ENCODE measurements at regions of chr7 and their contacts with region 1.

Region 1: GRCh38 chr7:149838224-149838947 is at the start of gene ZNF862:
- DNase-seq: peak; percentile 89 to 99 (median 96)
- ATAC-seq: peak; percentile 97
- H3K4me3 ChIP-seq: peak within 1 kb of the TSS; percentile 65 to 76
- H3K4me3 Mint-ChIP-seq: peak within 1 kb of the TSS; percentile 94
- H3K27ac ChIP-seq: peak within 1 kb of the TSS; percentile 43 to 46
- H3K27ac Mint-ChIP-seq: peak within 1 kb of the TSS; percentile 93
- H3K4me1 ChIP-seq: peaks cover 17% of the 10 kb centered on the region
- H3K4me1 Mint-ChIP-seq: peaks cover 48% of the 10 kb centered on the region
- H3K27me3 ChIP-seq: no peaks in the 10 kb centered on the region
- H3K27me3 Mint-ChIP-seq: no peaks in the 10 kb centered on the region
- CTCF ChIP-seq: no peak
- total RNA-seq, gene ZNF862: 18.8 TPM

Region 2: DNA sequence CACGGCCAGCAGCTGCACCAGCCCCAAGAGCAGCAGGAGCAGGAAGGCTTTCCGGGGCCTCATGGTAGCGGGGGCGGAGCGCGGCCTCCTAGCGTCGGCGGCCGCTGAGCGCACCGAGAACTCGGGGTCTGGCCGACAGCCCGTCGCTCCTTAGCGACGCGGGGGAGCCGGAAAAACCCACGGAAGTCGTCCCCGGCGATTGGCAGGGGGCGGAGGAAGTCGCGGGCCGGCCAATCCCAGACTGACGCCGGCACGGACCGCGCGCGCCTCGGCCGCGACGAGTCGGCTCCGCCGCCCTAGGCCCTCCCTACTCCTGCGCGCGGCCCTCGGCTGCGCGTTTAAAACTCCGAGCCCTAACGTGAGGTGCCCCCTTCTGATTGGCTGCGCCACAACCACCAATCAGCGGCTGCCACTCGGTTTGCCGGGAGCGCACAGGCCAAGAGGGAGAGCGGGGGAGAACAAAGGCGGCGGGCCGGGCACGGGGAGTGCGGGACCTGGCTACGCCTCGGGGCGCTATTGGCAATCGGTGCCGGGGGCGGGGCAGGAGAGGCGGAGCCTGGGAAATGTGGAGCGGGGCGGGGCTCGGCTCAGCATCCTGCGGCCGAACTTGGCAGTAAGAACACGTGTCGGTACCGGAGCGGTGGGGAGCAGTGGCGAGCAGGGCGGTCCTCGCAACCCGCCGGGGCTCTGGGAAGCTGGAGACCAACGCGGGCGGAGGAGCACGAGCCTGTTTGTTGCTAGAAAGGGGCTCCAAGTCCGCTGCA is 809.9 kb before region 1 on chr7 and contains the start of gene PDIA4:
- CTCF ChIA-PET with region 1: no interaction called
- POLR2A ChIA-PET with region 1: no interaction called
- intact Hi-C with region 1: loop called in 1 of 2 experiments (anchors 5 kb)
- DNase-seq: peak; percentile 98 to 100 (median 99)
- ATAC-seq: peak; percentile 88
- H3K4me3 ChIP-seq: peak within 1 kb of the TSS; percentile 58 to 78
- H3K4me3 Mint-ChIP-seq: peak within 1 kb of the TSS; percentile 87
- H3K27ac ChIP-seq: peak within 1 kb of the TSS; percentile 62 to 78
- H3K27ac Mint-ChIP-seq: peak within 1 kb of the TSS; percentile 94
- H3K4me1 ChIP-seq: peaks cover 27% of the 10 kb centered on the region
- H3K4me1 Mint-ChIP-seq: peaks cover 49% of the 10 kb centered on the region
- H3K27me3 ChIP-seq: no peaks in the 10 kb centered on the region
- H3K27me3 Mint-ChIP-seq: no peaks in the 10 kb centered on the region
- CTCF ChIP-seq: no peak
- total RNA-seq, gene PDIA4: 12.0 to 14.5 TPM

Region 3: DNA sequence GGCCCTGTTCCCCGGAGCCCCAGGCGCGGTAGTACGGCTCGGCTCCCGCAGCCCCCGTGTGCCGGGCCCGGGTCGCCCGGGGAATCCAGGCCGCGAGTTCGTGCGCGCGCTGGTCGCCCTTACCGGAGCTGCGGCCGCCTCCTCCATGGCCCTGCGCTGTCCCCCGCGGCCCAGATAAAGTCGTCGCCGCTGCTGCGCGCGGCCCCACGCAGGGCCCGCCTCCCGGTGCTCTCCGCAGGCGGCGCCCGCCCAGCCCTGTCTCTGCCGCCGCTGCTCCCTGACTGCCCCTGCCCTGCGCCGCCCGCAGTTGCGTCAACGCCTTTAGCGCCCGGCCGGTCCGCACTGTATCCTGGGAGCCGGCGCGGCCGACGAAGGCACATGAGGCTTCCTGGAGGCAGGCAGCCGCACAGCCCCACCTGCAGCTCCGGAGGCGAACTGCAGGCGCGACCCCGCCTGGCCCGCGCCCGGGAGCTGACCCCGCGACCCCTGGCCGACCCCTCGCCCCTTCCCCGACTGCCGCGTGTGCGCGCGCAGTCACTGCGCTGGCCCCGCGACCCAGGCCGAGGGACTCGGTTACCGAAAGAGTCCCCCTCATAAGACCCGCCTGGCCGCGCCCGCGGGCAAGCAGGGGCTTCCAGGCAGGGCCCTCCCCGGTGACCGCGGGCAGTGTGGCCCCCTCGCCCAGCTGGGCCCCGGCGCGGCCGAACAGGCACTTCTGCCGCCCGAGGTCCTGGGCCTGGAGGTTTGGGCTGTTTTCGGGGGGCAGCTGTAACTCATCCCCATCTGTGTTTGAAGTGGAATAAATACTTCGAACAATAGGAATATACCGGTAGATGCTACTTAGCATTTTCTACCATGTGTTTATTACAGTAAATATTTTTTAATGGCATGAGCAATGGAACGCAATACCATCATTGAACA is 213.7 kb before region 1 on chr7:
- CTCF ChIA-PET with region 1: interaction called, 3 read pairs
- POLR2A ChIA-PET with region 1: no interaction called
- intact Hi-C with region 1: loop called in 1 of 2 experiments (anchors 1 kb)
- DNase-seq: peak; percentile 84 to 96 (median 90)
- ATAC-seq: peak; percentile 84
- H3K4me3 ChIP-seq: peak overlapping the region; percentile 68 to 86
- H3K4me3 Mint-ChIP-seq: peak overlapping the region; percentile 93
- H3K27ac ChIP-seq: peak overlapping the region; percentile 46 to 68
- H3K27ac Mint-ChIP-seq: peak overlapping the region; percentile 93
- H3K4me1 ChIP-seq: peaks cover 27% of the 10 kb centered on the region
- H3K4me1 Mint-ChIP-seq: peaks cover 41% of the 10 kb centered on the region
- H3K27me3 ChIP-seq: no peaks in the 10 kb centered on the region
- H3K27me3 Mint-ChIP-seq: peaks cover 3% of the 10 kb centered on the region
- CTCF ChIP-seq: peak; percentile 99

Region 4: GRCh38 chr7:149771721-149772240 is 66.6 kb before region 1 on chr7:
- CTCF ChIA-PET with region 1: no interaction called
- POLR2A ChIA-PET with region 1: no interaction called
- intact Hi-C with region 1: loop called (anchors 1 to 2 kb)
- DNase-seq: peak; percentile 70 to 91 (median 84)
- ATAC-seq: peak; percentile 88
- H3K4me3 ChIP-seq: peak overlapping the region; percentile 63 to 66
- H3K4me3 Mint-ChIP-seq: peak overlapping the region; percentile 71
- H3K27ac ChIP-seq: no peak overlapping the region
- H3K27ac Mint-ChIP-seq: no peak overlapping the region
- H3K4me1 ChIP-seq: peaks cover 12% of the 10 kb centered on the region
- H3K4me1 Mint-ChIP-seq: peaks cover 6% of the 10 kb centered on the region
- H3K27me3 ChIP-seq: no peaks in the 10 kb centered on the region
- H3K27me3 Mint-ChIP-seq: no peaks in the 10 kb centered on the region
- CTCF ChIP-seq: no peak

Region 5: DNA sequence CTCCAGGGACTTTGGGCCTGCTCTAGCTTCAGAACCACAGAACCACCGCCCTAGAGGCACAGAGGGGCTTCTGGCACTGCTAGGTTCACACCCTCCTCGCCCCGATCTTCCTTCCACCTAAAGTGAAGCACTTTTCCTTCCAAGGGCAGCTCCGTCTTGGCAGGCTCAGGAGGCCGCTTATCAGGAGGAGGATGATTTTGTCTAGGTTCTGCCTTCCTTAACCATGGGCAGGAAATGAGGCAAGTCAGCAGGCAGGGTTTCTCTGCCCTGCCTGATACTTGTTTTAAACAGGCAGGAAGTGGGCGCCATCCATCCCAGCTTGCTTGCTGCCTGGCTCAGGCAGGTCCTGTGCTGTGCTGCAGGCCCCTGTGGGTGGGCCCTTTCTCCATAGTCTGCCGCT is 27.1 kb after region 1 on chr7:
- CTCF ChIA-PET with region 1: interaction called, 7 read pairs
- POLR2A ChIA-PET with region 1: interaction called, 51 read pairs
- intact Hi-C with region 1: no loop called
- DNase-seq: peak; percentile 33 to 84 (median 68)
- ATAC-seq: peak; percentile 75
- H3K4me3 ChIP-seq: peak overlapping the region; percentile 6 to 33
- H3K4me3 Mint-ChIP-seq: peak overlapping the region; percentile 67
- H3K27ac ChIP-seq: peak overlapping the region; percentile 66 to 91
- H3K27ac Mint-ChIP-seq: peak overlapping the region; percentile 98
- H3K4me1 ChIP-seq: peaks cover 92% of the 10 kb centered on the region
- H3K4me1 Mint-ChIP-seq: peaks cover 83% of the 10 kb centered on the region
- H3K27me3 ChIP-seq: no peaks in the 10 kb centered on the region
- H3K27me3 Mint-ChIP-seq: no peaks in the 10 kb centered on the region
- CTCF ChIP-seq: no peak

Region 6: DNA sequence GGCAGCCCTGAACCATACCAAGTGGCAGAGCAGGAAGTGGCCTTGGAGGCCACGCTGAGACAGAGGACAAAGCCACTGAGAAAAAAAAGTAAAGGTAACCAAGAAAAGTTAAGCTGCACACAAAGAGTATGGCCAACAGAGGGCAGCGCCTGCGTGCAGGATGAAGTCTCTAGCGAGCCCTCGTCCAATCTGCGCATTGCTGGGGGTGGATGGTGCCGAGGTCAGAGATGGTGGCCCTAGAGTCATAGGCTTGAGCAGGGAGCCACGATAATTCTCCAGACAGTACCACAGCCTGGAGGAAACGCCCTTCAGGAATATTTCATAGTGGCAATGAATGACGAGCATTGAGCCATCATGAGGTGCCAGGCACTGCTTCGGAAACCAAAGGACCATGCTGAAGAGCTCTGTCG is 45.1 kb after region 1 on chr7:
- CTCF ChIA-PET with region 1: interaction called, 10 read pairs
- POLR2A ChIA-PET with region 1: interaction called, 6 read pairs
- intact Hi-C with region 1: no loop called
- DNase-seq: peak in 6 of 9 experiments; percentile 52 to 72 (median 61)
- ATAC-seq: peak; percentile 81
- H3K4me3 ChIP-seq: no peak overlapping the region
- H3K4me3 Mint-ChIP-seq: no peak overlapping the region
- H3K27ac ChIP-seq: no peak overlapping the region
- H3K27ac Mint-ChIP-seq: no peak overlapping the region
- H3K4me1 ChIP-seq: peaks cover 8% of the 10 kb centered on the region
- H3K4me1 Mint-ChIP-seq: peaks cover 19% of the 10 kb centered on the region
- H3K27me3 ChIP-seq: no peaks in the 10 kb centered on the region
- H3K27me3 Mint-ChIP-seq: no peaks in the 10 kb centered on the region
- CTCF ChIP-seq: peak; percentile 56

Region 7: GRCh38 chr7:151057989-151058780 is 1219.8 kb after region 1 on chr7:
- CTCF ChIA-PET with region 1: no interaction called
- POLR2A ChIA-PET with region 1: no interaction called
- intact Hi-C with region 1: loop called in 1 of 2 experiments (anchors 10 kb)
- DNase-seq: peak; percentile 93 to 100 (median 97)
- ATAC-seq: peak; percentile 93
- H3K4me3 ChIP-seq: peak overlapping the region; percentile 71 to 83
- H3K4me3 Mint-ChIP-seq: peak overlapping the region; percentile 78
- H3K27ac ChIP-seq: peak overlapping the region; percentile 65 to 87
- H3K27ac Mint-ChIP-seq: peak overlapping the region; percentile 89
- H3K4me1 ChIP-seq: peaks cover 34% of the 10 kb centered on the region
- H3K4me1 Mint-ChIP-seq: peaks cover 41% of the 10 kb centered on the region
- H3K27me3 ChIP-seq: no peaks in the 10 kb centered on the region
- H3K27me3 Mint-ChIP-seq: no peaks in the 10 kb centered on the region
- CTCF ChIP-seq: no peak